ENCODE measurements at regions of chr12 and their contacts with region 1.

Region 1: DNA sequence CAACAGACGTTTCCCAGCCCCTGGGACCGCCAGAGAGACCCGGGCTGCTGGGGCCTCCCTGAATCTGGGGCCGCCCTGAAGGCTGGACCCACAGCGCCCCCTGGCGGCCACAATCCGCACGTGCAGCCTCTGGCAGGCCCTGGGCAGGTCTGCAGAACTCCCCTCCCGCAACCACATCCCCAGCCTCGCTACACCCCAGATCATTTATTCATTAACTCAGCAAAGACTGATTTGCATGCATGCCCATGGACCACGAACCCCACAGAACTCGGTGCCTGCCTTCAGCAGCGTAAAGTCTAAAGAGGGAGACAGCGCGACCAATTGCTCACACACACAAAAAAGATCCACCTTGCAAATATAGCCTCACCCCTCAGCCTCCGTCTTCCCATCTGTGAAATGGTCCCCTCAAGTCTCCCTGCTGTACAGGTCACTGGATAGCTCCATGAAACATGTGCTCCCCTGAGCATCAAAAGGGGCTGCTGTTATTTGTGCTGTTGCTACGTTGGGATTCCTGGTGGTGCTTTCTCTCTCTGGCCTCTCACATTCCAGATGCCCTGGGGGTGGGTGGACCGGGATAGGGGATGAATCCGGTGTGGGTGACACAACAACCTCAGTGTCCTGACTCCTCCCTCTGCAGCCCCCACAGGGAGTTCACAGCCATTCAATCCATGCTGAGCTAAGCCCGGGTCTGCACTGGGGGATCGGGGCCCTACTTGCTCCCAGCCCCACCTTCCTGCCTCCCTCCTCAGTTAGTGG is 96.4 kb downstream of the SCARB1 start:
- DNase-seq: peak; percentile 90
- H3K4me3 ChIP-seq: no peak overlapping the region
- H3K27ac ChIP-seq: peak overlapping the region; percentile 79 to 90 (median 82)
- H3K4me1 ChIP-seq: peaks cover 0 to 49% (median 44%) of the 10 kb centered on the region in 4 donors
- H3K27me3 ChIP-seq: no peaks in the 10 kb centered on the region
- CTCF ChIP-seq: peak; percentile 97 to 99 (median 99)
- EP300 ChIP-seq: no peak
- POLR2A ChIP-seq: no peak

Region 2: GRCh38 chr12:124036674-124037109 is 730.6 kb before region 1 on chr12:
- intact Hi-C with region 1: loop called (anchors 1 kb)
- DNase-seq: no peak
- H3K4me3 ChIP-seq: no peak overlapping the region
- H3K27ac ChIP-seq: no peak overlapping the region
- H3K4me1 ChIP-seq: peaks cover 0 to 6% (median 0%) of the 10 kb centered on the region in 4 donors
- H3K27me3 ChIP-seq: no peaks in the 10 kb centered on the region
- CTCF ChIP-seq: peak; percentile 39 to 90 (median 89)
- EP300 ChIP-seq: no peak
- POLR2A ChIP-seq: no peak

Region 3: GRCh38 chr12:124321040-124321481 is 446.2 kb before region 1 on chr12:
- intact Hi-C with region 1: loop called (anchors 10 kb)
- DNase-seq: no peak
- H3K4me3 ChIP-seq: no peak overlapping the region
- H3K27ac ChIP-seq: peak overlapping the region in 2 of 4 donors; percentile 0 to 22
- H3K4me1 ChIP-seq: peaks cover 0 to 11% (median 5%) of the 10 kb centered on the region in 4 donors
- H3K27me3 ChIP-seq: no peaks in the 10 kb centered on the region
- CTCF ChIP-seq: peak; percentile 64 to 93 (median 89)
- EP300 ChIP-seq: no peak
- POLR2A ChIP-seq: no peak

Region 4: DNA sequence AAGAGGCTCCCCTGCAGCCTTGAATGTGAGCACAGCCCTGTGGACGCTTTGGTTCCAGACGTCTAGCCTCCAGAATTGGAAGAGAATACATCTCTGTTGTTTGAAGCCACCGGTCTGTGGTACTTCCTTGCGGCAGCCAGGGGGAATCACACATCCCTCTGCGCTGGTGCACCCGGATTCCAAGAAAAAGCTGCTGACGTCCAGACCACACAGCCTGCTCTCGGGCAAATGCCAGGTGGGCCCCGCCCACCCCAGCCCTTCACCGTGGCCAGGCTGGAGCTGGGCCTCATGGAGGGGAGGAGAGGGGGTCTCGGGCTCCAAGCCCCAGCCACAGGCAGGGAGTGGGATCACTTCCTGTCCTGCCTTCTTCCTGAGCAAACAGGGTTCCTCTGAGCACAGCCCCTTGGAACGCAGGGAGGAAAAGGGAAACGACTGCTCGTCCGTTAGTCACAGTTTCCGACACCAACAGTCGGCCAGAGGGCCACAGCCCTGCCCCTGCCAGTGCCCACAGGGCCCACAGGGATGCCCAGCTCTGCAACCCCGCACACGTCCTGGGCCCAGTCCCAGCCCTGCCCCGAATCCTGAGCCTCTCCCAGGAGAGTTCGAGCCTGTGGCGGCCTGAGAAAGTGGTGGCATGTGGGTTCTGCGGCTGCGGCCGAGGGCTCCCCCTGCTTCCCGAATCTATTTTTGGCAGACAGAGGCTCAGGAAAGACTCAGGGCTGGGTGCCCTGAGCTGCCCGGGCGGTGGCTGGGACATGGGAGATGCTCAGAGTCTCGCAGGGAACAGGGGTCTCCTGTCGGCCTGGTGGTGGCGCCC is 387.1 kb before region 1 on chr12:
- intact Hi-C with region 1: loop called (anchors 2 kb)
- DNase-seq: peak; percentile 94
- H3K4me3 ChIP-seq: no peak overlapping the region
- H3K27ac ChIP-seq: peak overlapping the region; percentile 94 to 99 (median 96)
- H3K4me1 ChIP-seq: peaks cover 0 to 64% (median 53%) of the 10 kb centered on the region in 4 donors
- H3K27me3 ChIP-seq: no peaks in the 10 kb centered on the region
- CTCF ChIP-seq: peak; percentile 65 to 71 (median 68)
- EP300 ChIP-seq: peak in 2 of 4 donors; percentile 1 to 21
- POLR2A ChIP-seq: no peak

Region 5: GRCh38 chr12:124567661-124568373 is 199.4 kb before region 1 on chr12:
- intact Hi-C with region 1: loop called (anchors 1 kb)
- DNase-seq: peak; percentile 98
- H3K4me3 ChIP-seq: peak overlapping the region; percentile 4 to 96 (median 56)
- H3K27ac ChIP-seq: peak overlapping the region; percentile 91 to 100 (median 98)
- H3K4me1 ChIP-seq: peaks cover 0 to 56% (median 53%) of the 10 kb centered on the region in 4 donors
- H3K27me3 ChIP-seq: no peaks in the 10 kb centered on the region
- CTCF ChIP-seq: no peak
- EP300 ChIP-seq: peak in 2 of 4 donors; percentile 56 to 69
- POLR2A ChIP-seq: no peak

Region 6: DNA sequence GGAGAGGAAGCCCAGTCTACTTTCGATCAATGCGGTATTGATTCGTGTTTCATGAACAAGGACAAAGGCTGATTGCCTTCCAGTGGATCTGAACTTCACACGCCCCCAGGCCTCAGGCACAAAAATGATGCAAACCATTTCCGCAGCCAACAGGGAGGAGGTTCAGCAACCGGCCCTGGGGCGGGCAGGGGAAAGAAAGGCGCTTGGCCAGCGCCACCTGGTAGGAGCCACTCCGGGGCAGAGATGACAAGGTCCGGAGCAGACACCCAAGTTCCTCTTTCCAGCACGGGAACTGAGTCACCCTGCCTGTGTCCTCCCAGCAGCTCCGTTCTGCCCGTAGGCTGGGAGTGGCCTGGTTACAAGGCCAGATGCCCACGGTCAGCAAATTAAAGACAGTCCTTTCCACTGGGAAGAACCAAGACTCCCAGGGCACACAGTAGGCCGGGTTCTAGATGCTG is 40.0 kb before region 1 on chr12:
- intact Hi-C with region 1: no loop called
- DNase-seq: peak; percentile 90
- H3K4me3 ChIP-seq: no peak overlapping the region
- H3K27ac ChIP-seq: peak overlapping the region; percentile 41 to 68 (median 64)
- H3K4me1 ChIP-seq: peaks cover 0 to 20% (median 18%) of the 10 kb centered on the region in 4 donors
- H3K27me3 ChIP-seq: no peaks in the 10 kb centered on the region
- CTCF ChIP-seq: no peak
- EP300 ChIP-seq: peak in 1 of 4 donors; percentile 67
- POLR2A ChIP-seq: no peak

Measured in sigmoid colon (tissue), 7 donors.